ENCODE measurements at regions of chr11 and their contacts with region 1.

Region 1: DNA sequence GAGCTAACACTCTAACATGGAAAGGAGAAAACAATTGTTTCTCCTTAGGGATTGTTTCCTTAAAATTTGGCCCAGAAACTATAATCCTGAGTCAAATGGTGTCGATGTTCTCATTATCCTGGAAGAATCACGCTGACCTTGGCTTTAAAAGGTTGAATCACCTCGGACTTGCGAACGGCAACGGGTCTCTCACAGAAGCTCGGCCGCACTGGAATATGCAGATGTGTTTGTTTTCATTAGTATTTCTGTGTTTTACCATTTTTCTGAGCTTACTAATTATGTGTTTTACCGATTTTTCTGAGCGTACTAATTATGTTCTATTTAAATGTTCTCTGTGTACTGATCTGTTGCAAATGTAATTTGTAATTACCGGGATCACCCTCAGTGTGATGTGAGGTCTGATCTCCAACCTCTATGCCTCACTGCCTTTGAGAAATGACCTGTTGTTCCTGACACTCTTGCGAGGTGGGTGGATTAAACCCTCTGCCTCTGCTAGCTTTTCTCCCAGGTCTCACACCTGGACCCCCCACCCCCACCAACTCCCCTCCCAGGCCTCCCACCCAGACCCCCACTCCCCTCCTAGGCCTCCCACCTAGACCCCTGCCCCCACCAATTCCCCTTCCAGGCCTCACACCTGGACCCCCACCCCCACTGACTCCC is 38.3 kb upstream of the BRSK2 start:
- DNase-seq: no peak
- H3K4me3 ChIP-seq: no peak overlapping the region
- H3K27ac ChIP-seq: no peak overlapping the region; the same call in 1 of the 2 replicates
- H3K4me1 ChIP-seq: peaks cover 0 to 7% (median 4%) of the 10 kb centered on the region in 4 experiments; a peak in 4 of 7 replicates
- H3K27me3 ChIP-seq: no peaks in the 10 kb centered on the region
- CTCF ChIP-seq: no peak
- EP300 ChIP-seq: no peak
- POLR2A ChIP-seq: peak in 1 of 2 experiments; percentile 95; a peak in 2 of 3 replicates
- RAD21 ChIP-seq: no peak

Region 2: DNA sequence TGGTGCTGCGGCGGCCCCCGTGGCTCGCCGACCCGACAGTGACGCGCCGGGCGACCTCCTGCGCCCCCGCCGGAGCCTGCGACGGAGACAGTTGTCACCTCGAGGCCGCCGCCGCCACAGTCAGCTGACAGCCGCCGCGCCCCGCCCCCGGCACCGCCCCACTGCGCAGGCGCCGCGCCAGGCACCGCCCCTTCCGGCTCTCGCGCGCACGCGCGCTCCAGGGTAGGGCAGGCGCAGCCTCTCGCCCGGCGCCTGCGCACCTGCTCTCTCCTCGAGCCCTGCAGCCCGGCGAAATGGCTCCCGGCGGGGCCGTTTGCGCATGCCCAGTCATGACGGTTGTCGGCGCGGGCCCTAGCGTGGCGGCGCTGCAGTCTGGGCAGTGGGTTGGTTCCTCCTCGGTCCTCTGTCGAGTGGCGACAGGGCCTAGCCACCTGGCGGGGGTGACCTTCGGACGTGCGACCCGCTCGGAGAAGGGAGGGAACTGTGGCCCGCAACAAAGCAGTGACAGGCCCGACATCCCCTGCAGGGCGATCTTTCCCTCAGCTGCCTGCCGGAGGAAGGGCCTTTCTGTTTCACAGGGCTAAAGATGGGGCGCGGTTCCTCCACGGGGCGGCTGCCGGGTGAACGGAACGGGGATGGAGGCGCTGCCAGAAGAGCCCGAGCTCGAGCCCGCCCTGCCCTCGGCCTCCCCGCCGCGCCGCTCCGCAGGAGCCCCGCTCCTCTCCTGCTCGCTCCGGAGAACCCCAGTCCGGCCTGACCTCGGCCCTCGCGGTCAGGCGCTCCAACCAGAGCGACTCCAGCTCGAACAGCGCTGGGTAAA is 41.7 kb before region 1 on chr11 and contains the start of gene TOLLIP:
- CTCF ChIA-PET with region 1: interaction called, 3 read pairs
- POLR2A ChIA-PET with region 1: interaction called, 12 read pairs
- DNase-seq: peak; percentile 79 to 98
- H3K4me3 ChIP-seq: peak within 1 kb of the TSS; percentile 58 to 84 (median 62)
- H3K27ac ChIP-seq: peak within 1 kb of the TSS; percentile 36; the same call in 1 of the 2 replicates
- H3K4me1 ChIP-seq: peaks cover 0 to 7% (median 1%) of the 10 kb centered on the region in 4 experiments; a peak in 4 of 7 replicates
- H3K27me3 ChIP-seq: no peaks in the 10 kb centered on the region; a peak in 1 of 7 replicates
- CTCF ChIP-seq: no peak
- EP300 ChIP-seq: no peak
- POLR2A ChIP-seq: peak in 1 of 2 experiments; percentile 50; a peak in 1 of 3 replicates
- RAD21 ChIP-seq: no peak; a peak in 1 of 4 replicates
- total RNA-seq, gene TOLLIP: 23.7 and 28.1 TPM in 2 replicates

Region 3: GRCh38 chr11:1326435-1327063 is 24.9 kb before region 1 on chr11:
- CTCF ChIA-PET with region 1: no interaction called
- POLR2A ChIA-PET with region 1: no interaction called
- DNase-seq: no peak
- H3K4me3 ChIP-seq: no peak overlapping the region
- H3K27ac ChIP-seq: no peak overlapping the region
- H3K4me1 ChIP-seq: no peaks in the 10 kb centered on the region
- H3K27me3 ChIP-seq: 0 out of 7 replicates have a peak, but pooled peaks cover 0 to 2% (median 0%) of the 10 kb centered on the region in 4 experiments
- CTCF ChIP-seq: no peak
- EP300 ChIP-seq: no peak
- POLR2A ChIP-seq: no peak
- RAD21 ChIP-seq: no peak

Region 4: GRCh38 chr11:1338201-1339065 is 13.0 kb before region 1 on chr11:
- CTCF ChIA-PET with region 1: interaction called, 3 read pairs
- POLR2A ChIA-PET with region 1: interaction called, 11 read pairs
- DNase-seq: peak in 1 of 2 experiments; percentile 47
- H3K4me3 ChIP-seq: no peak overlapping the region
- H3K27ac ChIP-seq: no peak overlapping the region
- H3K4me1 ChIP-seq: peaks cover 2 to 8% (median 5%) of the 10 kb centered on the region in 4 experiments; a peak in 5 of 7 replicates
- H3K27me3 ChIP-seq: peaks cover 8 to 40% (median 32%) of the 10 kb centered on the region in 4 experiments
- CTCF ChIP-seq: no peak
- EP300 ChIP-seq: no peak
- POLR2A ChIP-seq: no peak
- RAD21 ChIP-seq: no peak

Region 5: DNA sequence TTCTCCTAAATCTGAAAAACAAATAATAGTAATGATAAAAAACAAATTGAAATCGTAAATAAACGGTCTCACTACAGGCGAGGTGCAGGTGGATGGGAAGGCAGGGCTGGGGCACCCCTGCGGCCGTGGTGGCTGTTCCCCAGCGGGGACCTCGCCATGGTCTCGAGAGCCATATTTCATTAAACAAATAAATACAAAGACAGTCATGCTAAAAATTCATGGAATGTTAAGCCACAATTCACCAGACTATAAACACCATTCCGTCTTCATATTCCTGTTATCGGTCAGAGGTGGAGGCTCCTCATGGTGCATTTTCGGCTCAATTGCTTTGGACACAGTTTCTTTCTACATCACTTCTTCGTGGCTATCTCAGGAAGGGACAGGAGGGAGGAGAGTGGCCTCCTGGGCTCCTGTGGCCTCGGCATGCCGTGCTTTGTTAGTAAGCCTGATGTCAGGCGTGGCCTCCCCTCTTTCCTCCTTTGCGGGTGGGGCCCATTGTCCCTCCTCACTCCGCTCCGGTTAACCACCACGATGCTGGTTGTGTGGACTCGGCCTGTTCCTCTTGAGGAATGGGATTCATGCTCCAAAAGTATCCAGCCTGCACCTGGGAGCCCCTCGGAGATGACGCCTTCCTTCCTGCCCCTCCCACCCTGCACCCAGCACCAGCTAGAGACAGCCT is 22.3 kb after region 1 on chr11:
- CTCF ChIA-PET with region 1: no interaction called
- POLR2A ChIA-PET with region 1: interaction called, 12 read pairs
- DNase-seq: no peak
- H3K4me3 ChIP-seq: no peak overlapping the region
- H3K27ac ChIP-seq: no peak overlapping the region
- H3K4me1 ChIP-seq: no peaks in the 10 kb centered on the region; a peak in 1 of 7 replicates
- H3K27me3 ChIP-seq: no peaks in the 10 kb centered on the region
- CTCF ChIP-seq: no peak
- EP300 ChIP-seq: no peak
- POLR2A ChIP-seq: no peak
- RAD21 ChIP-seq: no peak

Region 6: GRCh38 chr11:1389103-1389931 is 37.9 kb after region 1 on chr11:
- CTCF ChIA-PET with region 1: no interaction called
- POLR2A ChIA-PET with region 1: interaction called, 13 read pairs
- DNase-seq: peak; percentile 94 to 99
- H3K4me3 ChIP-seq: peak overlapping the region; percentile 48 to 74 (median 58)
- H3K27ac ChIP-seq: no peak overlapping the region
- H3K4me1 ChIP-seq: peaks cover 0 to 15% (median 8%) of the 10 kb centered on the region in 4 experiments; a peak in 6 of 7 replicates
- H3K27me3 ChIP-seq: peaks cover 0 to 12% (median 7%) of the 10 kb centered on the region in 4 experiments; a peak in 4 of 7 replicates
- CTCF ChIP-seq: peak in 2 of 3 experiments; percentile 6 to 11; a peak in 1 of 4 replicates
- EP300 ChIP-seq: no peak
- POLR2A ChIP-seq: no peak
- RAD21 ChIP-seq: no peak

Region 7: DNA sequence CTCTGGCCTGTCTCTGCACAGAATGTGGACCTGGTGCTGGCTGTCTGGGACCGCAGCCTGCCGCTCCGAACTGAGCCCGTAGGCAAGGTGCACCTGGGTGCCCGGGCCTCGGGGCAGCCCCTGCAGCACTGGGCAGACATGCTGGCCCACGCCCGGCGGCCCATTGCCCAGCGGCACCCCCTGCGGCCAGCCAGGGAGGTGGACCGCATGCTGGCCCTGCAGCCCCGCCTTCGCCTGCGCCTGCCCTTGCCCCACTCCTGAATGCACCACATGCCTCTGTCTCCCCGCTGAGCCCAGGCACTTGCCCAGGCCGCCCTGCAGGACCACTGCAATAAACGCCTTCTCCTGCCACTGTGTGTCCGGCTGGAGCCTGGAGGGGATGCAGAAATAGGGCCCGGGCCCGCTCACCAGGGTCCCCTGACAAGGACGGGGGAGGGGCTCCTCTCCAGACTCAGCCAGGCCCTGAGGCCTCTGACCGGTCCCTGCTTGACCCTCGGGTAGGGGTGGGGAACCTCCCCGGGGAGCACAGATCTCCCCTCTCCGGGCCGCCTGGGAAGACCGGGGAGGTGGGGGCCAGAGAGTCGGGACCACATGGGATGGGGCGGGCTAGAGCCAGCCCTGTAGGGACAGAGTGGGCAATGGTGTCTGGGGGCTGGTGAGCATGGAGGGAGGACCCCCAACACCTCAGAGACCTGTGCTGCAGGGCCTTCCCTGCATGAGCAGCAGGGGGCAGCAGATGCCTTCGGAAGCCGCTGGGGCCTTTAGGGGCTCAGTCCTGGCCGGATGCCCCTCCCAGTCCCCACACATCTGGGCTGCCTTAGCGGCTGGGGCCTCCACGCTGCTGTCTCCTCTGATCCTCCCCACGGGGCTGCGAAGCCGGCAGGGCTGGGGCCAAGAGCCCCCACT is 486.0 kb after region 1 on chr11:
- CTCF ChIA-PET with region 1: no interaction called
- POLR2A ChIA-PET with region 1: no interaction called
- DNase-seq: peak; percentile 50 to 90
- H3K4me3 ChIP-seq: no peak overlapping the region
- H3K27ac ChIP-seq: no peak overlapping the region
- H3K4me1 ChIP-seq: peaks cover 0 to 4% (median 2%) of the 10 kb centered on the region in 4 experiments; a peak in 4 of 7 replicates
- H3K27me3 ChIP-seq: no peaks in the 10 kb centered on the region; a peak in 2 of 7 replicates
- CTCF ChIP-seq: peak; percentile 91 to 94 (median 94)
- EP300 ChIP-seq: no peak
- POLR2A ChIP-seq: no peak
- RAD21 ChIP-seq: peak; percentile 92 to 93